ENCODE measurements at regions of chr1 and their contacts with region 1.

Region 1: DNA sequence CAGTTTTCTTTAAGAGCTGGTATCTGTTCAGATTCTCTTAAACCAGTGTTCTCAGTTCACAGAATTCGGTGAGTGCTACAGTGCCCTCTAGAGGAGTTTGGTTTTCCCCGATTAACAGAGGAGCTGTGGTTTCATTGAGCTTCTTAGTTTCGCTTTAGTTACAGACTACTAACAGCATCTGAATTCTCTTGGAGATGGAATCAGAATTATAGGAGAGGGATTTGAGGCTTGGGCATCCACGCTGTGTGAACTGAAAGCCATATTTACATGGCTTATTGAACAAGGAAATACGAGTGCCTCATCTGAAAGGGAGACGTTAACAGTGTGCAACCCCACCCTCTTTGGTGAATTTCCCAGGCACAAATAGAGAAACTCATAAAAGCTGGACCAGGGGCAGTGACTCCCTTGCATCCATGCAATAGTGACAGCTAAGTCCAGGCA is 202.0 kb downstream of the USH2A start:
- DNase-seq: peak; percentile 13
- ATAC-seq: peak; percentile 70
- H3K4me3 Mint-ChIP-seq: peak overlapping the region; percentile 20
- H3K27ac Mint-ChIP-seq: no peak overlapping the region
- H3K4me1 Mint-ChIP-seq: peaks cover 4% of the 10 kb centered on the region
- H3K27me3 Mint-ChIP-seq: no peaks in the 10 kb centered on the region

Region 2: GRCh38 chr1:215710036-215710898 is 511.0 kb before region 1 on chr1:
- CTCF ChIA-PET with region 1: no interaction called
- POLR2A ChIA-PET with region 1: no interaction called
- intact Hi-C with region 1: loop called in 1 of 2 experiments (anchors 1 kb)
- DNase-seq: peak; percentile 40
- ATAC-seq: peak; percentile 49
- H3K4me3 Mint-ChIP-seq: no peak overlapping the region
- H3K27ac Mint-ChIP-seq: no peak overlapping the region
- H3K4me1 Mint-ChIP-seq: no peaks in the 10 kb centered on the region
- H3K27me3 Mint-ChIP-seq: peaks cover 3% of the 10 kb centered on the region